Panc1 (cell line): ENCODE measurements at regions of chr12 and their contacts with region 1.

Region 1: DNA sequence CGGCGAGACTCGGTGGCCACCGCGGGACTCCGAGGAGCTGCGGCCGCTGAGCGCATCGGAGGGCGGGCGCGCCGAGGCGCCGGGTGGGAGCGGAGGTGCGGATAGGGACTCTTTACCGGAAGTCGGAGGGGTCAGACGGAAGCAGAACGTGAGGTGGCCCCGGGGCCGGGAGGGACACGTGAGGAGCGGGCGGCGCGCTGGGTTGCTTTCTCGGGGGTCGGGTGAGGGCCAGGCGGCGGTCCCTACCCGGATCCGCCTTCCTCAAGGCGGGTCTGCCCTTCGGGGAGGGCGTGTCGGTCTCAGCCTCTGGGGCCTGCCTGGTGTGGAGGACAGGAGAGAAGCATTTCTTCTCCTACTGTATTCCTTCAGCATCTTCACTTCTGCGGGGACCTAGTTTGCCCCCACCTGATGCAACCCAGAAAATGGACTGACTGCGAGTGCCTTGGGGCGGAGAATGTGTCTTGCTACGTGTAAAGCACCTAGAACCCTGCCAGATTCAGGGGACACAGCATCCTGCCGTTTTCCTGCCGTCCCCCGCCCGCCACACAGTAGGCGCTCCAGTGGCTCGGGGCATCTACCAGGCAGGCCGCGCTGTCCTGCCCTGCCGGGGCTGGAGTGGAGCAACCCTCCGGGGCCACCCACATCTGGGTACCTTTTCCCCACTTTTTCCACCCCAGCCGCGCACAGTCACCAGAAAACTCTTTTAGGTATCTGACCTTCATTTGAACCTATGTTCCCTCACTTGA is 517 bp upstream of the ATXN2 start:
- DNase-seq: peak; percentile 36
- ATAC-seq: peak; percentile 88
- H3K4me3 ChIP-seq: peak overlapping the region; percentile 78 to 91
- H3K27ac ChIP-seq: peak overlapping the region; percentile 98
- H3K4me1 ChIP-seq: peaks cover 13% of the 10 kb centered on the region
- H3K27me3 ChIP-seq: no peaks in the 10 kb centered on the region
- CTCF ChIP-seq: no peak

Region 2: GRCh38 chr12:111585690-111586089 is 13.9 kb before region 1 on chr12:
- CTCF ChIA-PET with region 1: no interaction called
- POLR2A ChIA-PET with region 1: interaction called, 11 read pairs
- in situ Hi-C with region 1: no loop called
- intact Hi-C with region 1: no loop called
- DNase-seq: no peak
- ATAC-seq: no peak
- H3K4me3 ChIP-seq: no peak overlapping the region
- H3K27ac ChIP-seq: no peak overlapping the region
- H3K4me1 ChIP-seq: peaks cover 6% of the 10 kb centered on the region; the same call in 1 of the 2 replicates
- H3K27me3 ChIP-seq: no peaks in the 10 kb centered on the region
- CTCF ChIP-seq: no peak

Region 3: DNA sequence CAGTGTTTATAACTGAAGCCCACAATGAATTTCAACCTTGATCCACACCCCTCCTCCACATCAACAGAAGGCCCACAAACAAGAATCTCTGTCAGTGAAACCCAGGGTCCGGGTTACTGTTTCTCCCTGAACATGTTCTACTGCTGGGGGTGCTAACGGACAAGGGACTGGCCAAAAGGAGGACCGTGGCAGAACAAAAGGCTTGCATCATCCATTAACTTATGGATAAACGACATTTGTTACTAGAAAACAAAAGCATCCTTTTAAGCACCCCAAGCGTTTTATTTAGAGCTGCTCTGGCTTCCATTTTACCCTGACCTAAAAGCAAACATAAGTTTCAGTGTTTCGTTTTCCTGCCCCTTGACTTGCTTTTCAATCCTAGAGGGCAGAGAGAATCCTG is 54.0 kb after region 1 on chr12:
- CTCF ChIA-PET with region 1: no interaction called
- POLR2A ChIA-PET with region 1: interaction called, 11 read pairs
- in situ Hi-C with region 1: no loop called
- intact Hi-C with region 1: no loop called
- DNase-seq: no peak
- ATAC-seq: no peak
- H3K4me3 ChIP-seq: no peak overlapping the region
- H3K27ac ChIP-seq: no peak overlapping the region
- H3K4me1 ChIP-seq: no peaks in the 10 kb centered on the region
- H3K27me3 ChIP-seq: no peaks in the 10 kb centered on the region
- CTCF ChIP-seq: no peak

Region 4: GRCh38 chr12:111841750-111842555 is 242.3 kb after region 1 on chr12 and contains the start of gene MAPKAPK5:
- CTCF ChIA-PET with region 1: no interaction called
- POLR2A ChIA-PET with region 1: no interaction called
- in situ Hi-C with region 1: no loop called
- intact Hi-C with region 1: no loop called
- DNase-seq: peak; percentile 61
- ATAC-seq: peak; percentile 95
- H3K4me3 ChIP-seq: peak within 1 kb of the TSS; percentile 97 to 99
- H3K27ac ChIP-seq: peak within 1 kb of the TSS; percentile 99
- H3K4me1 ChIP-seq: peaks cover 12% of the 10 kb centered on the region; the same call in 1 of the 2 replicates
- H3K27me3 ChIP-seq: no peaks in the 10 kb centered on the region
- CTCF ChIP-seq: no peak
- total RNA-seq, gene MAPKAPK5: 49.7 TPM